PC-9 (cell line): ENCODE measurements at regions of chr4 and their contacts with region 1.

Region 1: GRCh38 chr4:138235419-138235952 is 6.7 kb downstream of the SLC7A11 start:
- DNase-seq: peak in 1 of 2 experiments; percentile 95
- H3K4me3 ChIP-seq: peak overlapping the region; percentile 53; the same call in 1 of the 2 replicates
- H3K27ac ChIP-seq: peak overlapping the region; percentile 100
- H3K4me1 ChIP-seq: peaks cover 52% of the 10 kb centered on the region
- H3K27me3 ChIP-seq: no peaks in the 10 kb centered on the region
- CTCF ChIP-seq: no peak

Region 2: DNA sequence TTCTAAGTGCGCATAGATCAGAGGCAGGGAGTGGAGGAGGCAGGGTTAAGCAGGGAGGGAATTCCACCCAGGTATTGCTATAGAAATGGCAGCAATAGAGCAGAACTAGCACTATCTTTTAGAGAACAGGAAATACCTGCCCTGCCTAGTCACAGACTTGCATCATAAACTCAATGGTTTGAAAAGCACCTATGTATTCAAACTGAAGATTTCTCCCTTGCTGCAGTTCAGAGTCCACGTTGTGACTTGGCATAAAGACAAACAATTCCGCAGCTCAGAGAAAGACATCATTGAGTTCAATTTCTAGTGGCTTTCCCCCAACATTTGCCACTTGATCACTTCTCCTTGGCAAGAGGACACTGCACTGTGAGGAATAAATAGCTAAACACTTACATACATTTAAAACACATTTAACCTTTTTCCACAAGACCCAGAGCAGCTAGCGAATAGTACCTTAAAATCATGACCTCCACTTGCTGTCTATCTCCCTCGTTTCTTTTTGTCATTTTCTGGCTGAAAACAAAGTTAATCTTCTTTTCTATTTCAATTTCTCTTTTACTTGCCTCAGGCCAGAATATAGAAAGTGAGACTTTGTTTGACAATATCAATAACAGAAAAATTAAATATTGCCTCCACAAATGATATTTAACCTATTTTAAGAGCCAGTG is 35.8 kb before region 1 on chr4:
- CTCF ChIA-PET with region 1: no interaction called
- POLR2A ChIA-PET with region 1: interaction called, 3 read pairs
- intact Hi-C with region 1: loop called (anchors 2 kb)
- DNase-seq: peak; percentile 66 to 72
- H3K4me3 ChIP-seq: no peak overlapping the region
- H3K27ac ChIP-seq: peak overlapping the region; percentile 78
- H3K4me1 ChIP-seq: peaks cover 40% of the 10 kb centered on the region
- H3K27me3 ChIP-seq: no peaks in the 10 kb centered on the region
- CTCF ChIP-seq: no peak

Region 3: GRCh38 chr4:138555584-138555983 is 320.1 kb after region 1 on chr4:
- CTCF ChIA-PET with region 1: no interaction called
- POLR2A ChIA-PET with region 1: interaction called, 10 read pairs
- intact Hi-C with region 1: no loop called
- DNase-seq: no peak
- H3K4me3 ChIP-seq: no peak overlapping the region
- H3K27ac ChIP-seq: no peak overlapping the region
- H3K4me1 ChIP-seq: no peaks in the 10 kb centered on the region
- H3K27me3 ChIP-seq: no peaks in the 10 kb centered on the region
- CTCF ChIP-seq: peak; percentile 20; the same call in 1 of the 2 replicates

Region 4: GRCh38 chr4:139229534-139230039 is 994.1 kb after region 1 on chr4:
- CTCF ChIA-PET with region 1: no interaction called
- POLR2A ChIA-PET with region 1: no interaction called
- intact Hi-C with region 1: no loop called
- DNase-seq: no peak
- H3K4me3 ChIP-seq: no peak overlapping the region
- H3K27ac ChIP-seq: no peak overlapping the region
- H3K4me1 ChIP-seq: no peaks in the 10 kb centered on the region
- H3K27me3 ChIP-seq: no peaks in the 10 kb centered on the region
- CTCF ChIP-seq: peak; percentile 71